ENCODE measurements at regions of chr16 and their contacts with region 1.

Region 1: GRCh38 chr16:77113835-77114234 is 77.2 kb upstream of the MON1B start:
- DNase-seq: peak; percentile 31
- H3K4me3 ChIP-seq: no peak overlapping the region
- H3K27ac ChIP-seq: no peak overlapping the region
- H3K4me1 ChIP-seq: no peaks in the 10 kb centered on the region
- H3K27me3 ChIP-seq: no peaks in the 10 kb centered on the region
- CTCF ChIP-seq: no peak
- POLR2A ChIP-seq: no peak

Region 2: DNA sequence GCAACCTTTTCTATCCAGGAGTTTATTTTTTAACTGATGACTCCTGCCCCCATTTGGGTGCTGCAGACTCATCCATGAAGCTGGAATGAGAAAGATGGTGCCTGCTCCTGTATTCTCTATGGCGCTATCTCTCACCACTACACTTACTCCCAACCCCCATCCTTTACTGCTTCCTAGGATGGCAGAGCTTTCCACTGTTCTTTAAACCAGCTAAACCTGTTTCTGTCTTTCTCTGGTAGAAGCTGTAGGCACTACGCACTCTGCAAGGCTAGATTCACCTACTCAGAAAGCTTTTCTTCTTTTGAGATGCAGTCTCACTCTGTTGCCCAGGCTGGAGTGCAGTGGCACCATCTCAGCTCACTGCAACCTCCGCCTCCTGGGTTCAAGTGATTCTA is 274.0 kb after region 1 on chr16:
- CTCF ChIA-PET with region 1: no interaction called
- POLR2A ChIA-PET with region 1: no interaction called
- dilution Hi-C with region 1: no loop called
- intact Hi-C with region 1: no loop called
- DNase-seq: no peak
- H3K4me3 ChIP-seq: no peak overlapping the region
- H3K27ac ChIP-seq: peak overlapping the region; percentile 50
- H3K4me1 ChIP-seq: peaks cover 25% of the 10 kb centered on the region
- H3K27me3 ChIP-seq: no peaks in the 10 kb centered on the region
- CTCF ChIP-seq: no peak
- POLR2A ChIP-seq: no peak

Region 3: DNA sequence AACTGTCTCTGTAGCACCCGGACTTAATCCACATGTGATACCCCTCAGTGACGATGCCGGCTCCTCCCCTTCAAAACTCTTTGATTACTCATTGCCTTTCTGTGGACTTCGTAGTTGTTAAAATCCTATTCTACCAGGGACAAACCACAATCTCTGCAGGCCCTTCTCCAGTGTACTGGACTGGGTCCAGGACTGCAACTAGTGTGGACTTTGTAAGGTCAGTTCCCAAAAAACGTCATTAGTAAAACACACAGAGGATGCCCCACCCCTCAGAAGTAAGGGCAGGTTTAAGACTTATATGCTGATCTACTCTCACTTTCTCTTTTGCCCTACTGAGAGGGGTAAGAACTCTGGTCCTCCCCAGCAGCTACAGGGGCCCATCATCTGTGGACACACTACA is 597.9 kb after region 1 on chr16:
- CTCF ChIA-PET with region 1: no interaction called
- POLR2A ChIA-PET with region 1: no interaction called
- dilution Hi-C with region 1: no loop called
- intact Hi-C with region 1: loop called (anchors 5 kb)
- DNase-seq: no peak
- H3K4me3 ChIP-seq: no peak overlapping the region
- H3K27ac ChIP-seq: no peak overlapping the region
- H3K4me1 ChIP-seq: no peaks in the 10 kb centered on the region
- H3K27me3 ChIP-seq: no peaks in the 10 kb centered on the region
- CTCF ChIP-seq: no peak
- POLR2A ChIP-seq: no peak